CD14-positive monocyte (primary cell): ENCODE measurements at regions of chr20 and their contacts with region 1.

Region 1: GRCh38 chr20:60057123-60057801 is 99.0 kb downstream of the CDH26 start:
- DNase-seq: peak; percentile 64 to 81 (median 73)
- H3K4me3 ChIP-seq: peak overlapping the region in 2 of 3 experiments; percentile 5 to 65
- H3K4me3 Mint-ChIP-seq: peak overlapping the region; percentile 68 to 87
- H3K27ac ChIP-seq: peak overlapping the region; percentile 93 to 97
- H3K27ac Mint-ChIP-seq: peak overlapping the region; percentile 96 to 100 (median 99)
- H3K4me1 ChIP-seq: peaks cover 83 to 87% of the 10 kb centered on the region in 2 donors
- H3K4me1 Mint-ChIP-seq: peaks cover 85% of the 10 kb centered on the region
- H3K27me3 ChIP-seq: no peaks in the 10 kb centered on the region
- H3K27me3 Mint-ChIP-seq: no peaks in the 10 kb centered on the region
- CTCF ChIP-seq: peak; percentile 89

Region 2: DNA sequence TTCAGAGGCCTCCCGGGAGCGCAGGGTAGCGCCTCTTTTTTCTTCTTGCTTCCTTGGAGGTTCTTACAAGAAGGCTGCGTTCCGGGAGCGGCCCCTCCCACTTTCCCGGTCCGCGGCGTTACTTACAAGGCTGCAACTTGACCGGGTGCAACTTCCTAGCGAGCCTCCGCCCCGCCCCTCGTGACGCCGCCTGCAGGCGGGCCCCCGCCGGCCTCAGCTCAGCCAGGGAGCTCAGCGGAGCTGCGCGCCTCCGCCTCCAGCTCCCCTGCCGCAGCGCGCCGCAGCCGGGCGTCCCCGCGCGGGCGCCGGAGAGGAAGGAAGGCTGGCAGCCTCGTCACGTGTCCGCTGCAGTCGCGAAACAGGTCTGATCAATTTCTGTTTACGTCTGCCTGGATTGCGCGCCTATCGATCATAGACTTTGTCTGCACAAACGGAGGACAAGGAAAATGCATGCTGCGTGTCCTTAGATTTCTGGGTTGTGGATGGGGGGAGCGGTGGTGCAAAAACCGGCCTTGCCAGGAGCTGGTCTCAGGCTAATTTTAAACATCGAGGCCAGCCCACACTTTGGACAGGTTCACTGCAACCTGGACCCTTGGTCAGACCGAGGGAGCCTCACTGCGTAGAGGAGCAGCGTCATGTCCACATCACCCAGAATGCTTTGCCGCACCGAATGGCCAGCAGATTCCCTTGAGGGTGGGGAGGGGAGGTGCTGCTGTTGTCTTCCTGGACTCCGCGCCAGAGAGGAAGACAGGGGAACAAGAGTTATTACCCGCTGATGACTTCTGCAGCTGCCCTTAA is 116.9 kb before region 1 on chr20 and contains the starts of genes FAM217B and PPP1R3D:
- intact Hi-C with region 1: loop called (anchors 5 to 10 kb)
- DNase-seq: peak; percentile 90 to 91 (median 90)
- H3K4me3 ChIP-seq: peak within 1 kb of the TSS; percentile 79 to 99 (median 95)
- H3K4me3 Mint-ChIP-seq: peak within 1 kb of the TSS; percentile 95 to 97
- H3K27ac ChIP-seq: peak within 1 kb of the TSS; percentile 97 to 98
- H3K27ac Mint-ChIP-seq: peak within 1 kb of the TSS; percentile 97 to 100 (median 98)
- H3K4me1 ChIP-seq: peaks cover 52 to 63% of the 10 kb centered on the region in 2 donors
- H3K4me1 Mint-ChIP-seq: peaks cover 62% of the 10 kb centered on the region
- H3K27me3 ChIP-seq: no peaks in the 10 kb centered on the region
- H3K27me3 Mint-ChIP-seq: no peaks in the 10 kb centered on the region
- CTCF ChIP-seq: no peak
- polyA plus RNA-seq, gene FAM217B: 5.3 to 18.3 (median 18.1) TPM
- polyA plus RNA-seq, gene PPP1R3D: 2.0 to 3.9 (median 3.5) TPM

Region 3: GRCh38 chr20:60046011-60046413 is 11.2 kb before region 1 on chr20:
- intact Hi-C with region 1: loop called in 1 of 2 experiments (anchors 1 kb)
- DNase-seq: peak; percentile 83 to 98 (median 90)
- H3K4me3 ChIP-seq: peak overlapping the region in 1 of 3 experiments; percentile 35
- H3K4me3 Mint-ChIP-seq: peak overlapping the region; percentile 10 to 44
- H3K27ac ChIP-seq: peak overlapping the region; percentile 86 to 93
- H3K27ac Mint-ChIP-seq: peak overlapping the region; percentile 95 to 99 (median 97)
- H3K4me1 ChIP-seq: peaks cover 70 to 88% of the 10 kb centered on the region in 2 donors
- H3K4me1 Mint-ChIP-seq: peaks cover 85% of the 10 kb centered on the region
- H3K27me3 ChIP-seq: no peaks in the 10 kb centered on the region
- H3K27me3 Mint-ChIP-seq: no peaks in the 10 kb centered on the region
- CTCF ChIP-seq: no peak

Region 4: GRCh38 chr20:60117065-60117464 is 59.8 kb after region 1 on chr20:
- intact Hi-C with region 1: loop called (anchors 5 kb)
- DNase-seq: peak; percentile 67 to 80 (median 67)
- H3K4me3 ChIP-seq: peak overlapping the region; percentile 23 to 69 (median 42)
- H3K4me3 Mint-ChIP-seq: peak overlapping the region; percentile 65 to 84
- H3K27ac ChIP-seq: peak overlapping the region; percentile 72 to 87
- H3K27ac Mint-ChIP-seq: peak overlapping the region; percentile 79 to 91 (median 90)
- H3K4me1 ChIP-seq: peaks cover 66 to 74% of the 10 kb centered on the region in 2 donors
- H3K4me1 Mint-ChIP-seq: peaks cover 72% of the 10 kb centered on the region
- H3K27me3 ChIP-seq: no peaks in the 10 kb centered on the region
- H3K27me3 Mint-ChIP-seq: peaks cover 0 to 5% (median 0%) of the 10 kb centered on the region in 3 donors
- CTCF ChIP-seq: no peak

Region 5: DNA sequence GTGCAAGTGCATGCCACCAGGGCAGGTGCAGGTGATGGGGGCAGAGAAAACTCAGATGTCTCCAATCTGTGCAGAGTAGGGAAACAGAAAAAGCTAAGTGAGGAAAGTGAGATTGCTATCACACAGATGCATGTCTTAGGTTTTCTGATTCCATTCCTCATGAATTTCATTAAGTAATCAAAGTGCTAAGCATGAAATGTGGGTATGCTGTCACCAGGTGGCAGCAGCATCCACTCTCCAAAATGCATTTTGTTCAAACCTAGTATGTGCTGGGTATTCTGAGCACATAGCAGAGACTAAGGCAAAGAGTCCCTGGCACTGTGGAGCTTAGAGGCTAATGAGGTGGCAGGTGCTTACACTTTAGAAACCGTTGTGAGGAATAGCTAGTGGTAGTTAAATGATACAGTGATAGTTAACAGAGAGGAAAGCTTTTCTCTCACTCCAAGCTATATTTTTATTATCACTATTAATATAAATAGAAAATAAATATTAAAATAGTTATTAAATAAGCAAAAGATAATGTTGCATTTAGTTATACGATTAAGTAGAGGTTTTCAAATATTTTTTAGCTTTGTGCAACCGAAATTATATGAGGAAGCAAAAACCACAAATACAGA is 80.5 kb after region 1 on chr20:
- intact Hi-C with region 1: loop called (anchors 5 kb)
- DNase-seq: peak; percentile 42 to 66 (median 64)
- H3K4me3 ChIP-seq: peak overlapping the region; percentile 46 to 71 (median 55)
- H3K4me3 Mint-ChIP-seq: peak overlapping the region; percentile 78 to 92
- H3K27ac ChIP-seq: peak overlapping the region; percentile 55 to 77
- H3K27ac Mint-ChIP-seq: peak overlapping the region; percentile 64 to 96 (median 91)
- H3K4me1 ChIP-seq: peaks cover 60 to 70% of the 10 kb centered on the region in 2 donors
- H3K4me1 Mint-ChIP-seq: peaks cover 79% of the 10 kb centered on the region
- H3K27me3 ChIP-seq: no peaks in the 10 kb centered on the region
- H3K27me3 Mint-ChIP-seq: peaks cover 0 to 7% (median 4%) of the 10 kb centered on the region in 3 donors
- CTCF ChIP-seq: peak; percentile 87

Region 6: GRCh38 chr20:60224914-60225313 is 167.7 kb after region 1 on chr20:
- intact Hi-C with region 1: loop called in 1 of 2 experiments (anchors 10 kb)
- DNase-seq: no peak
- H3K4me3 ChIP-seq: no peak overlapping the region
- H3K4me3 Mint-ChIP-seq: no peak overlapping the region
- H3K27ac ChIP-seq: no peak overlapping the region
- H3K27ac Mint-ChIP-seq: no peak overlapping the region
- H3K4me1 ChIP-seq: peaks cover 22 to 32% of the 10 kb centered on the region in 2 donors
- H3K4me1 Mint-ChIP-seq: peaks cover 41% of the 10 kb centered on the region
- H3K27me3 ChIP-seq: no peaks in the 10 kb centered on the region
- H3K27me3 Mint-ChIP-seq: no peaks in the 10 kb centered on the region
- CTCF ChIP-seq: no peak